Activated B cell treated with CpG ODN at 0.5 μM for 24 hours (primary cell): ENCODE measurements at regions of chr18 and their contacts with region 1.

Region 1: GRCh38 chr18:41144441-41144840 is 810.6 kb upstream of the PIK3C3 start:
- DNase-seq: no peak
- ATAC-seq: no peak
- H3K4me3 Mint-ChIP-seq: no peak overlapping the region
- H3K27ac Mint-ChIP-seq: no peak overlapping the region
- H3K4me1 Mint-ChIP-seq: no peaks in the 10 kb centered on the region
- H3K27me3 Mint-ChIP-seq: no peaks in the 10 kb centered on the region
- CTCF ChIP-seq: no peak

Region 2: DNA sequence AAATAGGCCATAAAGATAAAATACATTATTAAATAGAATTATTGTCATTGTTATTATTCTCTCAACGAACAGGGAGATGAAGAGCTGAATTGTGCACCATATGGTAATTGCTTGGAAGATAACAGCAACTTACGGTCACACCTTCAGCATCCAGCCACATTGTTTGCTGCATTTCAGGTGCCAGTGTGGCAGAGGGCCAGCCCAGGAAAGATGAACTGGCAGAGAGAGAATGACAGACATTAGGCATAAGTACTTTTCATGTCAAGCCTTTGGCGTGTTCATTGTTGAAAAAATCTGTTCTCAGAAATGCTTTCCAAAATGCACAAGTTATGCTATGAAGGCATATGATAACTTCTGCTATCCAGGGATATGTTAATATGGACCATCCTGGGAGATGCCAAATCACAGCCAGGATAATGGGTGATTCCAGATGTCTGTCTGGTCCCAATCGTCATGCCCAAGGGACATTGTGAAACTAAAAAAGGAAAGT is 61.9 kb after region 1 on chr18:
- CTCF ChIA-PET with region 1: no interaction called
- POLR2A ChIA-PET with region 1: no interaction called
- intact Hi-C with region 1: loop called (anchors 10 kb)
- DNase-seq: no peak
- ATAC-seq: no peak
- H3K4me3 Mint-ChIP-seq: no peak overlapping the region
- H3K27ac Mint-ChIP-seq: no peak overlapping the region
- H3K4me1 Mint-ChIP-seq: no peaks in the 10 kb centered on the region
- H3K27me3 Mint-ChIP-seq: no peaks in the 10 kb centered on the region
- CTCF ChIP-seq: no peak